ENCODE measurements at regions of chr3 and their contacts with region 1.

Region 1: GRCh38 chr3:11335056-11335608 is 62.9 kb downstream of the ATG7 start:
- DNase-seq: peak; percentile 4
- H3K4me3 Mint-ChIP-seq: no peak overlapping the region
- H3K27ac Mint-ChIP-seq: no peak overlapping the region
- H3K4me1 Mint-ChIP-seq: no peaks in the 10 kb centered on the region
- H3K27me3 Mint-ChIP-seq: no peaks in the 10 kb centered on the region

Region 2: GRCh38 chr3:10901296-10901945 is 433.7 kb before region 1 on chr3:
- intact Hi-C with region 1: no loop called
- DNase-seq: no peak
- H3K4me3 Mint-ChIP-seq: no peak overlapping the region
- H3K27ac Mint-ChIP-seq: no peak overlapping the region
- H3K4me1 Mint-ChIP-seq: no peaks in the 10 kb centered on the region
- H3K27me3 Mint-ChIP-seq: peaks cover 2% of the 10 kb centered on the region

Region 3: GRCh38 chr3:10945683-10946287 is 389.3 kb before region 1 on chr3:
- intact Hi-C with region 1: loop called (anchors 1 kb)
- DNase-seq: peak; percentile 17
- H3K4me3 Mint-ChIP-seq: no peak overlapping the region
- H3K27ac Mint-ChIP-seq: no peak overlapping the region
- H3K4me1 Mint-ChIP-seq: no peaks in the 10 kb centered on the region
- H3K27me3 Mint-ChIP-seq: peaks cover 3% of the 10 kb centered on the region

Region 4: DNA sequence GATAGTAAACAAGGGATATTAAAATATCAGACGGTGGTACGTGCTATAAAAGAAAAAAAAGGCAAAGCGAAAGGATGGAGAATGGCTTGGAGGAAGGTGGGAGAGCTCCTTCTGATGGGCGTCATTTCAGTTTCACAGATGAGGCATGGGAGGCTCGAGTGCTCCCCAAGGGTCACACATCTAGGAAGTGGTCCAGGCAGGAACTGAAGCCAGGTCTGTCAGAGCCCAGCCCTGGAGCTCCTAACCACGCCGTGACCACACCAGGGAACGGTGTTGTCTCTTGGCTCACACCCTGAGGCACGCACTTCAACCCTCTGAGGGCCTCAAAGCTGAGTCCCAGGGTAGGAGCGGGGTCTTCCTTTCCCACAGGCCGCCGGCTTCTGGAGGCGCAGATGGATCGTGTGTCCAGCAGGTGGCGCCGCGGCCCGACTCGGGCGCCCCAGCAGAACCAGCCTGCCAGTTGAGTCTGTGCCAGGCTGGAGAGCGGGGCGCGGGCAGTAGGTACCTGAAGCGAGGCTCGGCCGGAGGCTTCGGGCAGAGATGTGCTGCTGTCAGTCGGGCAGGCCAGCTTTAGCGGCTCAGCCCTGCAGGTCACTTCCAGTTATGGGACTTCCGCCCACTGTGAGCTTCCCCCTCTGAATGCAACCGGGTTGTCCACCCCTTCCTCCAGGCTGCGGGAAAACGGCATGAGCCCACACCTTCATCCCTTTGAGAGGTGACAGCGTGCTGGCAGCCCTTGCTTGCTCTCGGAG is 274.5 kb before region 1 on chr3:
- intact Hi-C with region 1: loop called (anchors 1 kb)
- DNase-seq: peak; percentile 8
- H3K4me3 Mint-ChIP-seq: no peak overlapping the region
- H3K27ac Mint-ChIP-seq: no peak overlapping the region
- H3K4me1 Mint-ChIP-seq: no peaks in the 10 kb centered on the region
- H3K27me3 Mint-ChIP-seq: peaks cover 3% of the 10 kb centered on the region

Region 5: GRCh38 chr3:11155341-11156025 is 179.6 kb before region 1 on chr3:
- intact Hi-C with region 1: loop called (anchors 1 kb)
- DNase-seq: no peak
- H3K4me3 Mint-ChIP-seq: peak overlapping the region; percentile 12
- H3K27ac Mint-ChIP-seq: no peak overlapping the region
- H3K4me1 Mint-ChIP-seq: no peaks in the 10 kb centered on the region
- H3K27me3 Mint-ChIP-seq: peaks cover 73% of the 10 kb centered on the region

Region 6: DNA sequence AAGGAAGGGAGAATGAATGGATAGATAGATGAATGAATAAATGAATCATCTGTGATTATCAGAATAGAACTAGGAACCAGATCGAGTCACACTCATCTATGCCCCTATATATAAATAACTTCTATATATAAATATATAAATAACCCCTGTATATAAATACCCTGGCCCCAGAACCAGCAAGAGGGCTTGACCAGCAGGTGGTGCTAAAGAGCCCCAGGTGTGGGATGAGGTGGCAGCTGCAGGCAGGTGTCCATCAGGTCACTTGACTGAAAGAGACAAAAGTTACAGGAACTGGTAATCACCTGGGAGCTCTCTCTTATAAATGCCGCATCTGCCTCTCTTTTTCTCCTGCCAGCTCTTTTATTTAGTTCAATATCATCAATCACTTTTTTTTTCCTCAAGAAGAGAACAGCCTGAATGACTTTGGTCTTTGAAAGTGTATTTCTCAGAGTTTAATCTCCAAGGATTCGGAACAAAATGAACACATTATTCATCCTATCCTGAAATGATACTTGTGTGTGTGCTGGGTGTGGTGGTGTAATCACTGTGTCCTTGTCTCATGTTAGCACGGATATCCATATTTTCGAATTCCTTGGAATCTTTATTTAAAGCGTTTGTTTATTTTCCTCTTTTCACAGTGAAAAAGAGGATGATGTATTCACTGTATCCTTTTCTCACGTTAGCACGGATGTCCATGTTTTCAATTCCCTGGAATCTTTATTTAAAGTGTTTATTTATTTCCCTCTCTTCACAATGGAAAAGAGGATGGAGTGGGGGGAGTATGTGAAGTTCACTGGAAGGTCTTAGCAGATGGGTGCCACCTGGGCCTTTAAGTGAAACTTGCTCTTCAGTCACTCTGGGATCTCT is 98.3 kb before region 1 on chr3:
- intact Hi-C with region 1: loop called (anchors 1 kb)
- DNase-seq: peak; percentile 62
- H3K4me3 Mint-ChIP-seq: no peak overlapping the region
- H3K27ac Mint-ChIP-seq: no peak overlapping the region
- H3K4me1 Mint-ChIP-seq: peaks cover 27% of the 10 kb centered on the region
- H3K27me3 Mint-ChIP-seq: peaks cover 22% of the 10 kb centered on the region

Region 7: DNA sequence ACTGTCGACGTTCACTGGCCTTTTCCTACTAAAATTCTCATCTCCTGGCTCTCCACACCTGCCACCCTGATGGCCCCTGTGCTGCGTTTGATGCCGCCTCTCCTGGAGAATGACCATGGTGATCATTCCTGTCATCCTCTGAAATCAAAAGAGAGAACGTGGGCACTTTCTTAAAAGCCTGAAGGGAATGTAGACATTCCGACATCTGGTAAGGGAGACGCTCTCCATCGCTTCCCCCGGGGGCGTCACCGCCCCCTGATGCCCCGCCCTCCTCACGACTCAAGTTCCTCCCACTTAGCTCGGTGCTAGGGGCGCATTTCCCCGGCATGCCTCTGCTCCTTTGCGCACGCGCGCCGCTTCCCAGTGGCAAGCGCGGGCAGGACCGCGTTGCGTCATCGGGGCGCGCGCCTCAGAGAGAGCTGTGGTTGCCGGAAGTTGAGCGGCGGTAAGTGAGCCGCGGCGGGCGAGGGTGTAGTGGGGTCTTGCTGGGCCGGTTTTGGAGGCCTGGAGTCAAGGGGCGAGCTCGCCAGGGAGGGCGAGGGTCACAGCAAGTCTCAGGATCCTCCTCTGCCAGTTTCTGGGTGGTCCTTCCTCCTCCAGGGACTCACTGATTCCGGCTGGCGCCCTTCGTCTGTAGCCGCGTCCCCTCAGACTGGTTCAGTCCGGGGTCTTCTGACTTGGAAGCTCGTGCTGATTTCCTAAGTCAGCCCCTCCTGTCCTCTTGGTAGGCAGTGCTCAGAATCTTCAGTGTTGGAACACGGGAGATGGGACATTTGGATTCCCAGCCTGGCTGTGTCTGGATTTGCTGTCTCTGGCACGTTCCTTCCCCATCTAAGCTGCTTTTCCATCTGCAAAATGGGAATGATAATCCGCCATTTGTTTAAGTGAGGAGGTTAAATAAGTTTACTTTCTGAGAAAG is 62.9 kb before region 1 on chr3 and contains the start of gene ATG7:
- intact Hi-C with region 1: loop called (anchors 5 kb)
- DNase-seq: peak; percentile 96
- H3K4me3 Mint-ChIP-seq: peak within 1 kb of the TSS; percentile 90
- H3K27ac Mint-ChIP-seq: peak within 1 kb of the TSS; percentile 90
- H3K4me1 Mint-ChIP-seq: peaks cover 45% of the 10 kb centered on the region
- H3K27me3 Mint-ChIP-seq: peaks cover 3% of the 10 kb centered on the region
- total RNA-seq, gene ATG7: 38.6 and 44.0 TPM in 2 replicates

Region 8: DNA sequence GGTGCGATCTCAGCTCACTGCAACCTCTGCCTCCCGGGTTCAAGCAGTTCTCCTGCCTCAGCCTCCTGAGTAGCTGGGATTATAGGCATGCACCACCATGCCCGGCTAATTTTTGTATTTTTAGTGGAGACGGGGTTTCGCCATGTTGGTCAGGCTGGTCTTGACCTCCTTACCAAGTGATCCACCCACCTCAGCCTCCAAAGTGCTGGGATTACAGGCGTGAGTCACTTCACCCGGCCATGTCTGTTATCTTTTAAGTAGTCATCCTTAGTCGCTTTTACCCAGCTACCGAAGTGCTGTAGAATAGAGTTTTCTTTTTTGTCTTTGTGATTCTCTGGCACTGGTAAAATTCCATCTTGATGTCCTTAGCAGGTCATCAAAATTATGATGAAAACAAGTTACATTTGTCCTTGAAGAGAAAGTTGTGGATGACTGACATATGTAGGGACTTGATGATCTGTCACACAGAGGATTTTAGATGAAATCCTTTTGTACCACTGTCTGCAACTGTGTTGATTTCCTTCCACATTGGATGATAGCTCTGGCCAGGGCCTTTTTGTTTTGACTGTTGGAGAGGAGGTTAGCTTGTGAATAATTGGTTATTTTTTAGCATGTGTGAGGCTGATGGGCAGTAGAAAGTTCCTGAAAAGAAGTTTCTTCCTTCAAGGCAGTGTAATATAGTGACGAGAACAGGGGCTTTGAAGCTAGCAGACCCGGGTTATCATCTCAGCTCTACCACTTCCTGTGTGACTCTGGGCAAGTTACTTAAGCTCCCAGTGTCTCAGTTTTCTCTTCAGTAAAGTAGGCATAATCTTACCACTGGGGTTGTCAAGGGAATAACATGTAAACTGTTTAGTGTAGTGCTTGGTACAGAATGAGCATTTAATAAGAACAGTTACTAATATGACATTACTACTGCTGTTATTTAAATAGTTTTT is 44.1 kb before region 1 on chr3:
- intact Hi-C with region 1: loop called (anchors 1 kb)
- DNase-seq: peak; percentile 23
- H3K4me3 Mint-ChIP-seq: peak overlapping the region; percentile 29
- H3K27ac Mint-ChIP-seq: peak overlapping the region; percentile 83
- H3K4me1 Mint-ChIP-seq: peaks cover 52% of the 10 kb centered on the region
- H3K27me3 Mint-ChIP-seq: no peaks in the 10 kb centered on the region

Measured in activated T-helper 1 cell treated with anti-CD3 and anti-CD28 coated beads, Interleukin-12 subunit alpha, Interleukin-12 subunit beta, Interleukin-2, Interleukin-4 antibody, amounts not matched to agents 30 ng/mL and 10 ng/mL and 1 ng/mL, durations not matched to agents 14 hours and 24 hours and 36 hours (primary cell).